Activated T-helper 2 cell treated with anti-CD3 and anti-CD28 coated beads, Interferon-gamma antibody, Interleukin-2, Interleukin-4, amounts not matched to agents 10 μg/mL and 5 μg/mL and 100 μg/mL, durations not matched to agents 14 hours and 24 hours and 36 hours (primary cell): ENCODE measurements at regions of chr4 and their contacts with region 1.

Region 1: GRCh38 chr4:114263233-114263632 is 283.8 kb upstream of the ARSJ start:
- DNase-seq: no peak
- H3K4me3 Mint-ChIP-seq: no peak overlapping the region
- H3K27ac Mint-ChIP-seq: no peak overlapping the region
- H3K4me1 Mint-ChIP-seq: no peaks in the 10 kb centered on the region
- H3K27me3 Mint-ChIP-seq: no peaks in the 10 kb centered on the region

Region 2: GRCh38 chr4:114161809-114162208 is 101.4 kb before region 1 on chr4:
- intact Hi-C with region 1: no loop called
- DNase-seq: no peak
- H3K4me3 Mint-ChIP-seq: no peak overlapping the region
- H3K27ac Mint-ChIP-seq: no peak overlapping the region
- H3K4me1 Mint-ChIP-seq: no peaks in the 10 kb centered on the region
- H3K27me3 Mint-ChIP-seq: no peaks in the 10 kb centered on the region

Region 3: DNA sequence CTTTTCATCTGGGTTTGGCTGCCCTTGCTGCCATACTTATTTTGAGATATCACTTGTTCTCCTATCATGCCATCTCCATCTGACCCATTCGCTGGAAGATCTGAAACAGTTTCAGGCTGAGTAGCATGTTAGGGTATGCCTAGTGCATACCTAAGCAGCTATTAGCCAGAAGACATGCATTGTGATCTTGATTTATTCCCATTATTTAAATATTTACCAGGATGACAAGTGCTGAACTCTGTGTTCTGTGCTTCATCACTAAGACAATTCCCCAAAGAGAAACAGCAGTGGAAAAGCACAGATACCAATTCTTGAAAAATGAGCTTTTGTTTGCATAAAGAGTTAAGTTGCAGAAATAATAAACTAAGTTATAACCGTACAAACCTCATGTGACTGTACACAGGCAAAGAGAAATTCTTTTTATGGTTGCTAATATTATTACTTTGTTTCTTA is 12.8 kb before region 1 on chr4:
- intact Hi-C with region 1: loop called (anchors 1 kb)
- DNase-seq: no peak
- H3K4me3 Mint-ChIP-seq: no peak overlapping the region
- H3K27ac Mint-ChIP-seq: no peak overlapping the region
- H3K4me1 Mint-ChIP-seq: no peaks in the 10 kb centered on the region
- H3K27me3 Mint-ChIP-seq: no peaks in the 10 kb centered on the region